CD8-positive, alpha-beta T cell (primary cell): ENCODE measurements at regions of chr10 and their contacts with region 1.

Region 1: DNA sequence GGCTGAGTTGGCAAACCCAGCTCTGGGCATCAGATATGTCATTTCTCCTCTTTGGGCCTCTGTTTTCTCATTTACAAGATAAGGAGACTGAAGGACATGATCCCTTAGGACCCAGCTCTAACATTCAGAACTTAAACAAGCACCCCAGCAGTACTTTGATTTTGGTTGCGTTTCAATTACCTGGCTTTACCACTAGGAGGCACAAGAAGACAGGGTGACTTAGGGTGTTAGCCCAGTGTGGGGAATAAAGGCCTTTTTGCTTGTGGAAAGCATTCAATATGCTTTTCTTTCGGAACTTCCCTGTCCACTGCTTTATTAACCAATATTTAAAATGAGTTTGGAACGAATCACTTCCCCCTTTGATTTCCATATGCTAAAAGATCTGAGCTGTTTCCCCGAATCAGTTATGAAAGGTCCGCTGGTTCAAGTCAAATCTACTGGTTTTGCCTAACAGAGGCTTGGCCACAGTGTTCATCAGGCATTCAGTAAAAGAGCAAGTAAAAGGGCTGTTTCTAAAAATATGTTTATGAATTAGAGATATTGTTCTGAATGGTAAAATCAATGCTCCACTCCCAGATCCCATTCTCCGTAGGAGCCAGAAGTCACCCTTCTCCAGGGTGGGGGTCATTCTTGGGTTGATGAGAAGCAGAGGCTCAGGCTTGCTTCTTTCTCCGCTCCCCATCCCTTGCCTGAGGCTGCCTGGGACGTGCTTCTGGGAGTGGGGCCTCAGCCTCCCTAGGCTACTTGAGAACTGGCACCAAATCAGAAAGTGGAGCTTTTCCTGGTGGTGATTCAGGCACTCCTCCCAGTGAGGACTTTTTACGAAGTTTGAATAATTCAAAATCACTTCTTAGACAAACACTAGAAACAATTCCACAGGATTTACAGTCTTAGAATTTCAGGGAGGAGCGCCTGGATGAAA is 105.5 kb downstream of the MYOF start:
- DNase-seq: peak in 6 of 9 experiments; percentile 22 to 80 (median 39)
- ATAC-seq: peak; percentile 83
- H3K4me3 ChIP-seq: no peak overlapping the region
- H3K4me3 Mint-ChIP-seq: no peak overlapping the region
- H3K27ac ChIP-seq: no peak overlapping the region
- H3K27ac Mint-ChIP-seq: no peak overlapping the region
- H3K4me1 ChIP-seq: no peaks in the 10 kb centered on the region
- H3K4me1 Mint-ChIP-seq: no peaks in the 10 kb centered on the region
- H3K27me3 ChIP-seq: no peaks in the 10 kb centered on the region
- H3K27me3 Mint-ChIP-seq: peaks cover 12% of the 10 kb centered on the region
- CTCF ChIP-seq: peak; percentile 90

Region 2: DNA sequence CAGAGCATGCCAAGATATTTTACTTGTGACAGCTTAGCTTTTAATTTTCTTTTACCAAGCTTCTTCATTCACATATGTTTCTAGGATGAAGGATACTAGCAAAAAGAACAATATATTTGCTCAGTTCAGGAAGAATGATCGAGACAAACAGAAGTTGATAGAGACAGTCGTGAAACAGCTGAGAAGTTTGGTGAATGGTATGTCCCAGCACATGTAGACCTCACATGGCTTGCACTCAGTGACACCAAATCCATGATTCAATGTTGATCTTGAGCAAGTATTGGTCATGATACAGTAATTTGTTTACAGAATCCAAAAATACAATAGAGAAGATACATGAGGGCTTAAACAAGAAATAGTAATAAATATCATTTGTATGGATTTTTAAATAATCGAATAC is 318.5 kb before region 1 on chr10:
- CTCF ChIA-PET with region 1: no interaction called
- POLR2A ChIA-PET with region 1: no interaction called
- intact Hi-C with region 1: no loop called
- DNase-seq: no peak
- ATAC-seq: no peak
- H3K4me3 ChIP-seq: no peak overlapping the region
- H3K4me3 Mint-ChIP-seq: no peak overlapping the region
- H3K27ac ChIP-seq: no peak overlapping the region
- H3K27ac Mint-ChIP-seq: no peak overlapping the region
- H3K4me1 ChIP-seq: no peaks in the 10 kb centered on the region
- H3K4me1 Mint-ChIP-seq: peaks cover 20% of the 10 kb centered on the region
- H3K27me3 ChIP-seq: no peaks in the 10 kb centered on the region
- H3K27me3 Mint-ChIP-seq: peaks cover 8% of the 10 kb centered on the region
- CTCF ChIP-seq: no peak

Region 3: DNA sequence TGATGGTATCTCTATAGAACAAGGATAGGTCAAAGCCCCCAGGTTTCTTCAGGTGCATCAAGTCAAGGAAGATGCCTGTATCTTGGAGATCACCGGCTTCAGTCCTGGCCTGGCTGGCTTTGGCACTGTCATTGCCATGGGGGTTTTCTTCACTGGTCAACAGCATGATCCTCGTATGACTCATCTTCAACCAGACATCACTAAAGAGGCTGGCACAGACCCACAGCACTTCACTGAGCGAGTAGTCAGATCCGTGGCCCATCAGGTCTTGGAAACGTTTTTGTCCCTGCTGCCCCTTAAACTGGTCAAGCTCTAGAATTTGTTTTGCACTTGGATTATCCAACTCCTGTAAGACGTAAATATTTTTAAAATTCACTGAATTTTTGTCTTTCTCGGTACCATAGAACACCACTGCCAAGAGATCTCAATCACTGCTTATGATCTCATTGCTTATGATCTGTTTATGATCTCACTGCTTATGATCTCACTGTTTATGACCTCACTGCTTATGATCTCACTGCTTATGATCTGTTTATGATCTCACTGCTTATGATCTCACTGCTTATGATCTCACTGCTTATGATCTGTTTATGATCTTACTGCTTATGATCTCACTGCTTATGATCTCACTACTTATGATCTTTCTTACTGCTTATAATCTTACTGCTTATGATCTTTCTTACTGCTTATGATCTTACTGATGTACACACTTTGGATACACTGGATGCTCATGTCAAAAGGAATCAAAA is 167.7 kb before region 1 on chr10:
- CTCF ChIA-PET with region 1: no interaction called
- POLR2A ChIA-PET with region 1: no interaction called
- intact Hi-C with region 1: no loop called
- DNase-seq: no peak
- ATAC-seq: no peak
- H3K4me3 ChIP-seq: no peak overlapping the region
- H3K4me3 Mint-ChIP-seq: no peak overlapping the region
- H3K27ac ChIP-seq: no peak overlapping the region
- H3K27ac Mint-ChIP-seq: no peak overlapping the region
- H3K4me1 ChIP-seq: no peaks in the 10 kb centered on the region
- H3K4me1 Mint-ChIP-seq: no peaks in the 10 kb centered on the region
- H3K27me3 ChIP-seq: no peaks in the 10 kb centered on the region
- H3K27me3 Mint-ChIP-seq: no peaks in the 10 kb centered on the region
- CTCF ChIP-seq: no peak

Region 4: DNA sequence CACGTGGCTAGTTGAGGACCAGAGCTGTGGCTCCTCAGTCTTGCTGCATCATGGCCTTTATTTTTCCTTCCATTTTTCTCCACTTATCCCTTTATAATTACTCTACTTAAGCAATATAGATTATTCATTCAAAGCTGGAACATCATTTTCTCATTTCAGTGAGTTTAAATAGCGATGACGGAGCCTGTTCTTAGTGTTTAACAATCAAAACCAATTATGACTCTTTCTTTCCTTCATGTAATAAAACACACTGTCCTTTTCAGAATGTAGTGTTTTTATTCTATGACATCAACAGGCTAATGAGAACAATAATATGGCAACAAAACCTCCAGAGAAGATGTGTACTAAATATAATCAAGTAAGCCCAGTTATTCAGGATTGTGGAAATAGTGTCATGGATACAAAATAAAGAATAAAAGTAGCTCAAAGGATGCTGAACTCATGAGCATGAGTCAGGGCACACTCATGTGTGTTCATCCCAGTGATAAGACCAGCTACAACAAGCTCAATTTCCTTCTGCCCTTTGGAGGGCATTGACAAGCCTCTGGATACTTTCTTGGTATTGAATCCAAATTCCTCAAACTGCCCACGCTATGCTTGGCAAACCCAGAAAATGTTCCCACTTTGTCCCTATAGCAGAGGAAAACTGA is 114.5 kb before region 1 on chr10:
- CTCF ChIA-PET with region 1: no interaction called
- POLR2A ChIA-PET with region 1: no interaction called
- intact Hi-C with region 1: no loop called
- DNase-seq: no peak
- ATAC-seq: no peak
- H3K4me3 ChIP-seq: no peak overlapping the region
- H3K4me3 Mint-ChIP-seq: no peak overlapping the region
- H3K27ac ChIP-seq: no peak overlapping the region
- H3K27ac Mint-ChIP-seq: no peak overlapping the region
- H3K4me1 ChIP-seq: no peaks in the 10 kb centered on the region
- H3K4me1 Mint-ChIP-seq: no peaks in the 10 kb centered on the region
- H3K27me3 ChIP-seq: no peaks in the 10 kb centered on the region
- H3K27me3 Mint-ChIP-seq: no peaks in the 10 kb centered on the region
- CTCF ChIP-seq: no peak

Region 5: GRCh38 chr10:93352638-93353383 is 23.8 kb before region 1 on chr10:
- CTCF ChIA-PET with region 1: interaction called, 50 read pairs
- POLR2A ChIA-PET with region 1: no interaction called
- intact Hi-C with region 1: no loop called
- DNase-seq: peak in 2 of 9 experiments; percentile 35 to 50
- ATAC-seq: no peak
- H3K4me3 ChIP-seq: no peak overlapping the region
- H3K4me3 Mint-ChIP-seq: no peak overlapping the region
- H3K27ac ChIP-seq: no peak overlapping the region
- H3K27ac Mint-ChIP-seq: no peak overlapping the region
- H3K4me1 ChIP-seq: no peaks in the 10 kb centered on the region
- H3K4me1 Mint-ChIP-seq: no peaks in the 10 kb centered on the region
- H3K27me3 ChIP-seq: no peaks in the 10 kb centered on the region
- H3K27me3 Mint-ChIP-seq: peaks cover 21% of the 10 kb centered on the region
- CTCF ChIP-seq: peak; percentile 75

Region 6: GRCh38 chr10:93397020-93397419 is 20.4 kb after region 1 on chr10:
- CTCF ChIA-PET with region 1: interaction called, 61 read pairs
- POLR2A ChIA-PET with region 1: no interaction called
- intact Hi-C with region 1: no loop called
- DNase-seq: no peak
- ATAC-seq: no peak
- H3K4me3 ChIP-seq: no peak overlapping the region
- H3K4me3 Mint-ChIP-seq: no peak overlapping the region
- H3K27ac ChIP-seq: no peak overlapping the region
- H3K27ac Mint-ChIP-seq: no peak overlapping the region
- H3K4me1 ChIP-seq: no peaks in the 10 kb centered on the region
- H3K4me1 Mint-ChIP-seq: no peaks in the 10 kb centered on the region
- H3K27me3 ChIP-seq: no peaks in the 10 kb centered on the region
- H3K27me3 Mint-ChIP-seq: peaks cover 4% of the 10 kb centered on the region
- CTCF ChIP-seq: no peak

Region 7: DNA sequence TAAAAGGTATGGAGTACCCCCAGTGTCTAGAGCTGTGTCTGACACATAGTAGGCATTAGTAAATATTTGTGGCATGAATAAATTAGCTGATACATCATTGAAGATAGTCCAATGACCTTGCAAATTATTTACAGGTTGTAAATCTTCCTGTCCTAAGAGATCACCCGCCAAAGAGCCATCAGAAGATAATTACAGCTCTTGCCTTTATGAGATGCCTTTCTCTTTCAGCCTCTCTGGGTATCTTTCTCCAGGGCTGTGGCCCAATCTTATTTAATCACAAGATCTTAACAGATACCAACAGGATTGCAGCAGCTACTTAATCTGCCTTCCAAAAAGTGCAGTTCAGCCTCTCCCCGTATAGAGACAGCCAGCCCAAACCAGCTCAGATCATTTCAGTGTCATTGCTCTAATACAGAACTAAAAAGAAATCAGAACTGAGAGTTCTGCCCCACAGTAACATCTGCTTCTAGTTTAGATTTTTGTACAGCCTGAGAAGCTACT is 64.0 kb after region 1 on chr10:
- CTCF ChIA-PET with region 1: interaction called, 16 read pairs
- POLR2A ChIA-PET with region 1: no interaction called
- intact Hi-C with region 1: no loop called
- DNase-seq: no peak
- ATAC-seq: no peak
- H3K4me3 ChIP-seq: no peak overlapping the region
- H3K4me3 Mint-ChIP-seq: no peak overlapping the region
- H3K27ac ChIP-seq: no peak overlapping the region
- H3K27ac Mint-ChIP-seq: no peak overlapping the region
- H3K4me1 ChIP-seq: no peaks in the 10 kb centered on the region
- H3K4me1 Mint-ChIP-seq: no peaks in the 10 kb centered on the region
- H3K27me3 ChIP-seq: no peaks in the 10 kb centered on the region
- H3K27me3 Mint-ChIP-seq: no peaks in the 10 kb centered on the region
- CTCF ChIP-seq: no peak

Region 8: GRCh38 chr10:93503075-93503474 is 126.4 kb after region 1 on chr10:
- CTCF ChIA-PET with region 1: interaction called, 119 read pairs
- POLR2A ChIA-PET with region 1: no interaction called
- intact Hi-C with region 1: no loop called
- DNase-seq: peak in 1 of 9 experiments; percentile 22
- ATAC-seq: no peak
- H3K4me3 ChIP-seq: no peak overlapping the region
- H3K4me3 Mint-ChIP-seq: peak overlapping the region; percentile 46
- H3K27ac ChIP-seq: no peak overlapping the region
- H3K27ac Mint-ChIP-seq: peak overlapping the region; percentile 53
- H3K4me1 ChIP-seq: no peaks in the 10 kb centered on the region
- H3K4me1 Mint-ChIP-seq: peaks cover 5% of the 10 kb centered on the region
- H3K27me3 ChIP-seq: no peaks in the 10 kb centered on the region
- H3K27me3 Mint-ChIP-seq: no peaks in the 10 kb centered on the region
- CTCF ChIP-seq: no peak

Region 9: DNA sequence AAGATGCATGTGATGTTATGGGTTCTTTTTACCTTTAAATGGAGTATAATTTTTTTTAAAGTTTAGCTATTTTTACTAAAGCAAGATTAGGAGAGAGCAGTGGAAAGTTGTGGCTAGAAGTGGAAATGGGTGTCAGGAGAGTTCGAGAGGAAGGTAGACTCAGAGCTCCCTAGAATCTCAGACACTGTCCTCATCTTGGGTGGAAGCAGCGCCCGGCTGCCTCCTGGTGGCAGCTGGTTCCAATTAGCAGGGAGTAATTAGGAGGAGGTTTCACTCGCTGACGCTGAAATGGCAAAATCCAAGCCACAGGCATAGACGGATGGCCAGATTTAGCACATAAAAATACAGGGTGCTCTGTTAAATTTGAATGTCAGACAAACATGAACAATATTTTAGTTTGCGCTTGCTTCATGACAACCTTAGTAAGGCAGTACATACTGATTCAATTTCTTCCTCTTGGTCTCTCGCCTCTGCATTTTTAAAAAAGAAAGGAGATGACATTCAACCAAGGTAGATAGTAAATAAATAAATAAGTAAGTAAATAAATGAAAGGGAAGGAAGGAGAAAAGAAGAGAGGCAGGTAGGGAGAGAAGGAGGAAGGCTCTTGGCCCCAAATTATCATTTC is 439.6 kb after region 1 on chr10:
- CTCF ChIA-PET with region 1: interaction called, 4 read pairs
- POLR2A ChIA-PET with region 1: no interaction called
- intact Hi-C with region 1: loop called in 1 of 2 experiments (anchors 5 kb)
- DNase-seq: peak in 3 of 9 experiments; percentile 7 to 30 (median 23)
- ATAC-seq: no peak
- H3K4me3 ChIP-seq: no peak overlapping the region
- H3K4me3 Mint-ChIP-seq: no peak overlapping the region
- H3K27ac ChIP-seq: no peak overlapping the region
- H3K27ac Mint-ChIP-seq: no peak overlapping the region
- H3K4me1 ChIP-seq: no peaks in the 10 kb centered on the region
- H3K4me1 Mint-ChIP-seq: no peaks in the 10 kb centered on the region
- H3K27me3 ChIP-seq: peaks cover 0 to 3% of the 10 kb centered on the region in 2 experiments
- H3K27me3 Mint-ChIP-seq: peaks cover 24% of the 10 kb centered on the region
- CTCF ChIP-seq: no peak

Region 10: DNA sequence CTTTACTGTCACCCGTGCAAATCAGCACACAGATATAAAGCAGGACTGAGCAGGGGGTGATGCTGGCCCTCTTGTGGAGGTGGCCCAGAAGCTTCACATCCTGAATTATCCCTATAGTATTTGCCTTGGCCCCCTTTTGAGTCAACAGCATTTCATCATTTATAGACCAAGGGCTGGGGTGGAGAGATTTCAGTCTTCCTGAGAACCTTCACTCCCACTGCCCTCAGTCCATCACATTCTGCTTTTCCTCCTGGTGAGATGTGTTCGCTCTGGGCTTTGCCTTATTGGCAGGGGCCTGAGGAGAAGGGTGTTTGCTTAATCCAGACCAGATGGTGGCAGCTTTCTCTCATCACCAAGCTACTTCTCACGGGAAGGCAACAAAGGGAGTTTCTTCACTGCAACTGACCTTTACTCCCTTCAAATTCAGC is 938.4 kb after region 1 on chr10:
- CTCF ChIA-PET with region 1: interaction called, 4 read pairs
- POLR2A ChIA-PET with region 1: no interaction called
- intact Hi-C with region 1: loop called in 1 of 2 experiments (anchors 5 kb)
- DNase-seq: no peak
- ATAC-seq: no peak
- H3K4me3 ChIP-seq: no peak overlapping the region
- H3K4me3 Mint-ChIP-seq: no peak overlapping the region
- H3K27ac ChIP-seq: no peak overlapping the region
- H3K27ac Mint-ChIP-seq: no peak overlapping the region
- H3K4me1 ChIP-seq: no peaks in the 10 kb centered on the region
- H3K4me1 Mint-ChIP-seq: no peaks in the 10 kb centered on the region
- H3K27me3 ChIP-seq: no peaks in the 10 kb centered on the region
- H3K27me3 Mint-ChIP-seq: peaks cover 12% of the 10 kb centered on the region
- CTCF ChIP-seq: no peak